Mammary epithelial cell (primary cell): ENCODE measurements at regions of chr19 and their contacts with region 1.

Region 1: DNA sequence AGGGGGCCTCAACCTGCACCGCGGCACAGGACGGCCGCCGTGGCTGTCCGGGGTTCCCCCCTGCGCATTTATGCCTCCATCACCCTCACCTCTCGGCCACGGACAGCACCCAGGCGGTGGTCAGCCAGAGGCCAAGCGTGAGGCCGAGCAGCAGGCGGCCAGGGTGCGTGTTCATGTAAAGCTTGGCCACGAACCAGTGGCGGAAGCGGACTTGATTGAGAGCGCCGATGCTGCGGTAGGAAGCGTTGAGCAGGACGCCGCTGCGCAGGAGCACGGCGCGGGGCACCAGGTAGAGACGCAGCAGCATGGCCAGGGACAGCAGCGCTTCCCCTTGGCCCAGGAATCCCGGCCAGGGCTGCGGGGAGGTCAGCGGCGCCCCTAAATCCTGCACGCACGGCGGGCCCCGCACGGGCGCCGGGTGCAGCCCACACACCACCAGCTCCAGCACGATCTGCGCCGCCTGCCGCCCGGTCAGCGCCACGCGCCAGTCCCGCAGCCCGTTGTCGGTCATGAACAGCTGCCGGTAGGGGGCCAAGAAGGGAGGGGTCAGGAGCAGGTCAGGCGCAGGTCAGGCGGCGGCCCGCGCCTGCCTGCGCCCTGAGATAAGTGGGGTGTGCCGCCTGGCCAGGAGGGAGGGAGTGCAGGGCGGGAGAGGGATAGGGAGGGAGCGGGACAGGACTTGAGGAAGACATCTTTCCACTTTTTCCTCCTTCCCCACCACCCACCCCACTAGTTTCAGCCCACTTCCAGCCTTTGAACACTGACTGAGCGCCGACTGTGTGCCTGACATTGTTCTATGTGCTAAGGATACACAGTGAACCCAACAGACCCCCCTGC is 6.5 kb downstream of the KCNN4 start:
- DNase-seq: no peak
- H3K4me3 ChIP-seq: no peak overlapping the region
- H3K27ac ChIP-seq: no peak overlapping the region
- H3K4me1 ChIP-seq: peaks cover 42% of the 10 kb centered on the region
- H3K27me3 ChIP-seq: no peaks in the 10 kb centered on the region
- CTCF ChIP-seq: no peak

Region 2: GRCh38 chr19:43675269-43675879 is 98.9 kb before region 1 on chr19:
- CTCF ChIA-PET with region 1: no interaction called
- dilution Hi-C with region 1: loop called (anchors 5 kb)
- in situ Hi-C with region 1: no loop called
- intact Hi-C with region 1: no loop called
- DNase-seq: peak; percentile 100
- H3K4me3 ChIP-seq: no peak overlapping the region
- H3K27ac ChIP-seq: peak overlapping the region; percentile 98
- H3K4me1 ChIP-seq: peaks cover 20% of the 10 kb centered on the region
- H3K27me3 ChIP-seq: no peaks in the 10 kb centered on the region
- CTCF ChIP-seq: no peak

Region 3: DNA sequence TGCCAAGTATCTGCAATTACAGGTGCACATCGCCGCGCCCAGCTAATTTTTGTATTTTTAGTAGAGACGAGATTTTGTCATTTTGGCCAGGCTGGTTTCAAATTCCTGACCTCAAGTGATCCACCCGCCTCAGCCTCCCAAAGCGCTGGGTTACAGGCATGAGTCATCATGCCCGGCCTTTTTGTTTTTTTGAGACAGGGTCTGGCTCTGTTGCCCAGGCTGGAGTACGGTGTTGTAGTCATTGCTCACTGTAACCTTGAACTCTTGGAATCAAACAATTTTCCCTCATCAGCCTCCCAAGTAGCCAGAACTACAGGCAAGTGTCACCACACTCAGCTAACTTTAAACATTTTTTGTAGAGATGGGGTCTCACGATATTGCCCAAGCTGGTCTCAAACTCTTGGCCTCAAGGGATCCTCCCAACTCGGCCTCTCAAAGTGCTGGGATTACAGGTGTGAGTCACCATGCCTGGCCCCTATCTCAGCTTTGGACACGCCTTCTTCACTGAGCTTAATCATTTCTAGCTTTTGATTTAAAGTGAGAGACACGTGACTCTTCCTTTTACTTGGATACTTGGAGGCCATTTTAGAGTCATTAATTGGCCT is 62.5 kb before region 1 on chr19:
- CTCF ChIA-PET with region 1: no interaction called
- dilution Hi-C with region 1: no loop called
- in situ Hi-C with region 1: no loop called
- intact Hi-C with region 1: no loop called
- DNase-seq: peak; percentile 24
- H3K4me3 ChIP-seq: no peak overlapping the region
- H3K27ac ChIP-seq: no peak overlapping the region
- H3K4me1 ChIP-seq: no peaks in the 10 kb centered on the region
- H3K27me3 ChIP-seq: no peaks in the 10 kb centered on the region
- CTCF ChIP-seq: no peak